ENCODE measurements at regions of chr6 and their contacts with region 1.

Region 1: DNA sequence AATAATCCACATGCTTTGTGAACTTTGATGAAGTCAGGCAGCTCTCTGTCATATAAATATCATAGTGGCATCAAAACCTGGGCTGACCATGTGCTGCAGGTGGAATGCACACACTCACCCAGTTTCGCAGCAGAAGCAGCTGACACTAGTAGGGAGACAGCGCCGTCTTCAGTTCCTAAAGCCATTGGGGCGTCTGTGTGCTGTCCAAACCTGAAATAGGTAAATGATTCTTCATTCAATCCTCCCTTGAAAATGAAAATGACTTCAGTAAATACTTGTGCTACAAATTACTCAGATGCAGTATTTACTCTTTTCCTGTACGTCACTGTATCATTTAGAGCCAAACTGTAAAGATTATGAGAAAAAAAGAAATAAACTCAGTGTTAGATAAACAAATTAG is 127.5 kb downstream of the EYA4 start:
- DNase-seq: peak; percentile 51
- ATAC-seq: peak; percentile 74
- H3K4me3 ChIP-seq: no peak overlapping the region
- H3K27ac ChIP-seq: no peak overlapping the region
- H3K4me1 ChIP-seq: 0 out of 2 replicates have a peak, but pooled peaks cover 4% of the 10 kb centered on the region
- H3K27me3 ChIP-seq: no peaks in the 10 kb centered on the region
- CTCF ChIP-seq: peak; percentile 56

Region 2: GRCh38 chr6:133286765-133287164 is 81.9 kb before region 1 on chr6:
- CTCF ChIA-PET with region 1: no interaction called
- POLR2A ChIA-PET with region 1: no interaction called
- intact Hi-C with region 1: loop called (anchors 5 kb)
- DNase-seq: peak; percentile 47
- ATAC-seq: no peak
- H3K4me3 ChIP-seq: no peak overlapping the region
- H3K27ac ChIP-seq: no peak overlapping the region
- H3K4me1 ChIP-seq: no peaks in the 10 kb centered on the region
- H3K27me3 ChIP-seq: no peaks in the 10 kb centered on the region
- CTCF ChIP-seq: peak; percentile 61